ENCODE measurements at regions of chr4 and their contacts with region 1.

Region 1: DNA sequence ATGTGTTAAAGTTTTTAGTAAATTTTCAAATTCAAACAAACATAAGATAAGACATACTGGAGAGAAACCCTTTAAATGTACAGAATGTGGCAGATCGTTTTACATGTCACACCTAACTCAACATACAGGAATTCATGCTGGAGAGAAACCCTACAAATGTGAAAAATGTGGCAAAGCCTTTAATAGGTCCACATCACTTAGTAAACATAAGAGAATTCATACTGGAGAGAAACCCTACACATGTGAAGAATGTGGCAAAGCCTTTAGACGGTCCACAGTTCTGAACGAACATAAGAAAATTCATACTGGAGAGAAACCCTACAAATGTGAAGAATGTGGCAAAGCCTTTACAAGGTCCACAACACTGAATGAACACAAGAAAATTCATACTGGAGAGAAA is 32.8 kb downstream of the ZNF595 start:
- DNase-seq: no peak
- ATAC-seq: no peak
- H3K4me3 Mint-ChIP-seq: no peak overlapping the region
- H3K27ac Mint-ChIP-seq: no peak overlapping the region
- H3K4me1 Mint-ChIP-seq: no peaks in the 10 kb centered on the region
- H3K27me3 Mint-ChIP-seq: no peaks in the 10 kb centered on the region

Region 2: GRCh38 chr4:71830-72229 is 14.1 kb before region 1 on chr4:
- CTCF ChIA-PET with region 1: interaction called, 3 read pairs
- POLR2A ChIA-PET with region 1: no interaction called
- intact Hi-C with region 1: loop called in 1 of 2 experiments (anchors 2 kb)
- DNase-seq: no peak
- ATAC-seq: no peak
- H3K4me3 Mint-ChIP-seq: no peak overlapping the region
- H3K27ac Mint-ChIP-seq: no peak overlapping the region
- H3K4me1 Mint-ChIP-seq: no peaks in the 10 kb centered on the region
- H3K27me3 Mint-ChIP-seq: no peaks in the 10 kb centered on the region

Measured in activated CD4-positive, alpha-beta T cell treated with anti-CD3 and anti-CD28 coated beads for 36 hours (primary cell).